IMR-90 (cell line): ENCODE measurements at regions of chr1 and their contacts with region 1.

Region 1: DNA sequence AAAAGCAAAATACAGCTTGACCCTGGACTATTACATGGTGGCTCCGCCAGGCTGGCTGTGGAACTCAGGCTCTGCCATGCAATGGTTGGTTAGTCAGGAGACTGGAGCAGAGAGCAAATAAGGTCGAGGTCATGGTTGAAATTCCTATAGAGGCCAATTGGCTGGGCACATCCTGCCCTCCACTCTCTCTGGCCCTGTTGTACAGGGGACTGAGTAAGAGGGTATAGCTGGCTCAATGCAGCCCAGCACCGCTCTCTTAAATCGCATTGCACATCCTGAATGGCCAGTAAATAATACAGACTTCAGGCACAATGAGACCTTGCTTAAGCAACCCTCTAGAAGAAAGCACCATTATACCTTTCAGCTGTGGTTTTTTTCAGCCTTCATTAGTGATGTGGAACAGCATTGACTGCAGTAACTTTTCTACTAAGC is 59.3 kb upstream of the PPP2R5A start:
- DNase-seq: no peak
- ATAC-seq: no peak
- H3K4me3 ChIP-seq: no peak overlapping the region
- H3K27ac ChIP-seq: no peak overlapping the region
- H3K4me1 ChIP-seq: peaks cover 5% of the 10 kb centered on the region
- H3K27me3 ChIP-seq: no peaks in the 10 kb centered on the region; the same call in 1 of the 2 replicates
- CTCF ChIP-seq: no peak
- POLR2A ChIP-seq: no peak
- RAD21 ChIP-seq: no peak

Region 2: DNA sequence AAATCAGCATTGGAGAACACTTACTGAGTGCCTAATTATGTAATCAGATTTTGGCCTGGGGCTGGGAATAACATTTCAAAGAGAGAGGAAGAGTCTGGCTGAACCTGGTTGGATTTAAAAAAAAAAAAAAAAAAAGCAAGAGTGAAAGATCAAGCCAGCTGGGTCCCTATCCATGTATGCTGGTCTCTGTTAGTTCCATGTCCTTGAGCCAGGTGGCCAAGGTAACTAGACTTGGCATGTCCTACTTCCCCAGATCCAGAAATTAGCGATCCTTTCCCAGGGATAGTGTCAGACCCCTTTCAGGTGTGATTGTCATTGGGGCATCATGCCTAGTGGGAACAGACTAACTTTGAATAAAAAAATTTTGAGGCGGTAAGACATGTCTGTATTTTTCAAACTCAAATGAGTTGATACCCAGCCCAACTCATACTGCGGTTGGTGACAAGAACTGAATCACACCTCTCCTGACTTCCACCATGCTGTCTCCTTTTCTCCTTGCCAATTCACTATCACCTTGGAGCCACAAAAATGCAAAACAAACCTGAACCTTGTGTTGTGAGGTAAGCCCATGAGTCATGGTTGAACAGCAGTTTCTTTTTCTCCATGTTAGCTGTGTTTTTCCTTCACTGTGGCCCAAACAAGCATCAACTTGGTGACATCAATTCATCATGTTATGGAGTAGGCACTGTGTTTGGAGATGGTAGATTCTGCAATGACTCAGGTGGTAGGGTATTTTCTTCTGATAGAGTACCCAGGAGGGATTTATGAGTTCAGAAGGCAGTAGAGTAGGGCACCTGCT is 34.9 kb after region 1 on chr1:
- CTCF ChIA-PET with region 1: no interaction called
- POLR2A ChIA-PET with region 1: no interaction called
- dilution Hi-C with region 1: no loop called
- in situ Hi-C with region 1: no loop called
- intact Hi-C with region 1: loop called (anchors 5 kb)
- DNase-seq: peak; percentile 35
- ATAC-seq: no peak
- H3K4me3 ChIP-seq: no peak overlapping the region
- H3K27ac ChIP-seq: no peak overlapping the region
- H3K4me1 ChIP-seq: no peaks in the 10 kb centered on the region; the same call in 1 of the 2 replicates
- H3K27me3 ChIP-seq: no peaks in the 10 kb centered on the region
- CTCF ChIP-seq: no peak
- POLR2A ChIP-seq: no peak
- RAD21 ChIP-seq: no peak

Region 3: DNA sequence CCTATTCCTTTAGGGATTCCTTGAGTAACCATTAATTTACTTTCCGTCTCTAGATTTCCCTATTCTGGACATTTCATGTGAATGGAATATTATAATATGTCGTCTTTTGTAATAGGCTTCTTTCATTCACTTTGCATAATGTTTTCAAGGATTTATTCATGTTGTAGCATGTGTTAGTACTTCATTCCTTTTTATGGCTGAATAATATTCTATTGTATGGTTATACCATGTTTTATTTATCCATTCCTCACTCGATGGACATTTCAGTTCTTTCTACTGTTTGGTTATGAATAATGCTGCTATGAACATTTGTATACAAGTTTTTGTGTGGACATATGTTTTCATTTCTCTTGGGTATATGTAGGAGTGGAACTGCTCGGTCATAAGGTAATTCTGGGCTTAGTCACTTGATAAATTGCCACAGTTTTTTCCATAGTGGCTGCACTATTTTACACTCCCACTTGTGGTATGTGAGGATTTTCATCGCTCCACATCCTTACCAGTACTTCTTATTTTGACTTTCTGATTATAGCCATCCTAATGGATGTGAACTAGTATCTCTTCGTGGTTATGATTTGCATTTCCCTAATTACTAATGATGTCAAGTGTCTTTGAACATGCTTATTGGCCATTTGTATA is 77.0 kb after region 1 on chr1:
- CTCF ChIA-PET with region 1: no interaction called
- POLR2A ChIA-PET with region 1: no interaction called
- dilution Hi-C with region 1: no loop called
- in situ Hi-C with region 1: no loop called
- intact Hi-C with region 1: no loop called
- DNase-seq: peak; percentile 76
- ATAC-seq: peak; percentile 64
- H3K4me3 ChIP-seq: no peak overlapping the region
- H3K27ac ChIP-seq: no peak overlapping the region
- H3K4me1 ChIP-seq: no peaks in the 10 kb centered on the region
- H3K27me3 ChIP-seq: no peaks in the 10 kb centered on the region
- CTCF ChIP-seq: no peak
- POLR2A ChIP-seq: no peak
- RAD21 ChIP-seq: no peak

Region 4: DNA sequence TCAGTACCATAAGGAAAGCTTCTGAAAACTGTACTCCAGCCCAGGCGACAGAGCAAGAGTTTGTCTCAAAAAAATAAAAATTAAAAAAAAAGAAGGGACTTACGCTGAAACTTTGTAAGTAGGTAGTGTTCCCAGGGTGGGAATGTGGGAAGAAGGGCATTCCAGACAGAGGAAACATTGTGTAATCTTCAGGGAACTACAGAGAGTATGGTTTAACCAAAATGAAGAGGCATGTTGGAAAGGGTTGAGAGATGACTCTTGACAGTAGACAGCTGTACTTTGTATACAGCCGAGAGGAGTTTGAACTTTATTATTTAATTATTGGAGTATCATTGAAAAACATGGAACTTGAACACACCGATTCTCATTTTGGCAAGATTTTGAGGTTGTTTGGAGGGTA is 102.4 kb after region 1 on chr1:
- CTCF ChIA-PET with region 1: no interaction called
- POLR2A ChIA-PET with region 1: no interaction called
- dilution Hi-C with region 1: no loop called
- in situ Hi-C with region 1: no loop called
- intact Hi-C with region 1: no loop called
- DNase-seq: peak; percentile 45
- ATAC-seq: peak; percentile 66
- H3K4me3 ChIP-seq: no peak overlapping the region
- H3K27ac ChIP-seq: no peak overlapping the region
- H3K4me1 ChIP-seq: no peaks in the 10 kb centered on the region
- H3K27me3 ChIP-seq: no peaks in the 10 kb centered on the region
- CTCF ChIP-seq: no peak
- POLR2A ChIP-seq: no peak
- RAD21 ChIP-seq: no peak